ENCODE measurements at regions of chr2 and their contacts with region 1.

Region 1: GRCh38 chr2:108927936-108928659 is 60.9 kb downstream of the EDAR start:
- DNase-seq: peak; percentile 51
- H3K4me3 ChIP-seq: no peak overlapping the region
- H3K27ac ChIP-seq: no peak overlapping the region
- H3K4me1 ChIP-seq: no peaks in the 10 kb centered on the region
- H3K27me3 ChIP-seq: no peaks in the 10 kb centered on the region
- CTCF ChIP-seq: peak; percentile 71 to 73
- POLR2A ChIP-seq: no peak

Region 2: DNA sequence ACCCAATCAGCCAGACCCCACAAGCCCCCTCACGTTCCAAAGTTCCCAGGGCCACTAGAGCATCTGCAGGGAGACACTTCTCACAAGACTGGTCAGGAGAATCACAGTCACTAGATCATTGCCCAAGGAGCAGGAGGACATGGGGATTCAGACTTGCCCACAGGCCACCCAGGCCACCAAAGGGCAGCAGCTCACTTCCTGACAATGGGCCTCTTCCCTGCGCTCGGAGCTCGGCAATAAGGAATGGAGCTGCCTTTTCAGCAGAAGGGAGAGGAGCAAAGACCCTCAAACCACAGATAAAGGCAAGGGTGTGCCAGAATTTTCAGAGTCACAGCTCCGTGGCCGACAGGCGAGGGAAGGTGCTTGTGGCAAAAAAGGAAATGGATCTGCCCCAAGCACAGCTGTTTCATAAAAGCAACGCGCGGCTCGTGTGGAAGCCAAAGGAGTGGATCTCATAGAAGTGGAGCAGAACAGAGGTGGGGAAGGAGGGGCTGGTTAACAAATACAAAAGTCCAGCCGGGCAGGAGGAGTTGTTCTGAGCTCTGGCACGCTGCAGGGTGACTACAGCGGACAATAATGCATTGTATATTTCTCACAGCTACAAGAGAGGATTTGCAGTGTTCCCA is 11.2 kb before region 1 on chr2:
- CTCF ChIA-PET with region 1: interaction called, 23 read pairs
- POLR2A ChIA-PET with region 1: no interaction called
- dilution Hi-C with region 1: no loop called
- intact Hi-C with region 1: no loop called
- DNase-seq: no peak
- H3K4me3 ChIP-seq: no peak overlapping the region
- H3K27ac ChIP-seq: no peak overlapping the region
- H3K4me1 ChIP-seq: no peaks in the 10 kb centered on the region
- H3K27me3 ChIP-seq: no peaks in the 10 kb centered on the region
- CTCF ChIP-seq: no peak
- POLR2A ChIP-seq: no peak